A549 (cell line): ENCODE measurements at regions of chr15 and their contacts with region 1.

Region 1: DNA sequence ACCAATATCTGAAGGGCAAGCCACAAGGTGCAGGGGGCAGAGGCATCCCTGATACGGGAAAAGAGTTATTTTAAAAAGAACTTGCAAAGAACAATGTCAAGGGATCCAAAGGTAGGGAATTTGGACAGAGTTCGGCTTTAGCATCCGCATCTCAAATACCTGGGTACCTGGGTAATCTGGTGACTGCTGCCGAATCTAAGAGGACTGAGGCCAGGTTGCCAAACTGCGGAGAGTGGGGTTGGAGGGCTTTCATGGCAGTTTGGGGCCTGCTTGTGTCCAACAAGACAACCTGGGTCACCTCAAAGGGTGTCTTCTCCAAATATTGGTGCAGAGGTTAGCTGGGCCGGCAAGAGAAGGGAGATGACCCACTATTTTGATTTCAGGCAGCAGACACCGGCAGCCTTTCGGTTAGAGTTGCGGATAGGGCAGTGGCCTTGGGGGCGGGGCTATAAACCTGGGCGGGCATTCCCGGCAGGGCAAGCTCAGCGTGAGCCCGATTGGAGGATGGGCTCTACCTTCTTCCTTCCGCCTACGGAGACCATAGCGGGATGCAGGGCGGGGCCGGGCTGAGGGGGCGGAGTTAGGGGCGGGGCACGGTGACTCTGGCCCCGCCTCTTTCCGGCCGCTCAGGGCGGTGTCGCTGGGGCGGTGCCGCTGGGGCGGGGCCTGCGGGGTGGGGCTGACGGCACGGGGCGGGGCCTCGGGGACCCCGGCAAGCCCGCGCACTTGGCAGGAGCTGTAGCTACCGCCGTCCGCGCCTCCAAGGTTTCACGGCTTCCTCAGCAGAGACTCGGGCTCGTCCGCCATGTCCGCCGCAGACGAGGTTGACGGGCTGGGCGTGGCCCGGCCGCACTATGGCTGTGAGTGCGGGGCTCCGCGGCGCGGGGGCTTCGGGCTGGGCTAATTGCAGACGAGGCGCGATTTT is at the start of gene IQGAP1:
- DNase-seq: peak; percentile 98
- ATAC-seq: peak; percentile 96 to 97
- H3K4me3 ChIP-seq: peak within 1 kb of the TSS; percentile 78
- H3K27ac ChIP-seq: peak within 1 kb of the TSS; percentile 93 to 95
- H3K4me1 ChIP-seq: peaks cover 10% of the 10 kb centered on the region; the same call in 2 of the 3 replicates
- CTCF ChIP-seq: no peak
- EP300 ChIP-seq: no peak
- POLR2A ChIP-seq: peak; percentile 94
- RAD21 ChIP-seq: peak in 1 of 2 experiments; percentile 37; a peak in 2 of 5 replicates
- polyA plus RNA-seq, gene IQGAP1: 168 and 181 TPM in 2 replicates

Region 2: GRCh38 chr15:90001062-90001682 is 386.6 kb before region 1 on chr15 and contains the start of gene ZNF710:
- CTCF ChIA-PET with region 1: no interaction called
- POLR2A ChIA-PET with region 1: no interaction called
- DNase-seq: peak; percentile 58 to 77
- ATAC-seq: peak; percentile 17 to 40
- H3K4me3 ChIP-seq: peak within 1 kb of the TSS; percentile 85
- H3K27ac ChIP-seq: peak within 1 kb of the TSS; percentile 93 to 97
- H3K4me1 ChIP-seq: peaks cover 66% of the 10 kb centered on the region
- CTCF ChIP-seq: no peak
- EP300 ChIP-seq: no peak
- POLR2A ChIP-seq: 0 out of 2 replicates have a peak, but pooled peaks have one; percentile 30
- RAD21 ChIP-seq: no peak
- polyA plus RNA-seq, gene ZNF710: 2.6 and 5.0 TPM in 2 replicates

Region 3: DNA sequence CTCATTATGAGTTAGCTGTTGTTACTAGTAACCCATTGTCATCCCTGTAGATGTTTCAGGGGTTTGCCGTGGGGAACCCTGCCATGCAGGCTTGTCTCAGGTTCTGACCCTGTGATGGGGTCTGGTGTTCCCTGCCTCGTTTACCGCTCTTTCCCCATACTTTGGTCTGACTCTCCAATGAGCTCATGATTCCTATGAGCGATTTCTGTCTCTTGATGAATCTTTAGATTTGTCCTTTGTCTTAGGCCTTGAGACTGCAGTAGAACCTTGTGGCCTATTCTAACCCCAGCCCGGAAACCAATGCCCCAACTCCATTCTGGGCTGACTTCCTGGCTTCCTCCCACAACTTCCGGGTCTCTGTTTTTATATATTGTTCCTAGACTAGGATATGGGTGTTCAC is 11.0 kb before region 1 on chr15:
- CTCF ChIA-PET with region 1: interaction called, 8 read pairs
- POLR2A ChIA-PET with region 1: interaction called, 10 read pairs
- DNase-seq: no peak
- ATAC-seq: no peak
- H3K4me3 ChIP-seq: no peak overlapping the region
- H3K27ac ChIP-seq: no peak overlapping the region
- H3K4me1 ChIP-seq: peaks cover 3% of the 10 kb centered on the region; the same call in 1 of the 3 replicates
- CTCF ChIP-seq: no peak
- EP300 ChIP-seq: no peak
- POLR2A ChIP-seq: no peak
- RAD21 ChIP-seq: no peak

Region 4: DNA sequence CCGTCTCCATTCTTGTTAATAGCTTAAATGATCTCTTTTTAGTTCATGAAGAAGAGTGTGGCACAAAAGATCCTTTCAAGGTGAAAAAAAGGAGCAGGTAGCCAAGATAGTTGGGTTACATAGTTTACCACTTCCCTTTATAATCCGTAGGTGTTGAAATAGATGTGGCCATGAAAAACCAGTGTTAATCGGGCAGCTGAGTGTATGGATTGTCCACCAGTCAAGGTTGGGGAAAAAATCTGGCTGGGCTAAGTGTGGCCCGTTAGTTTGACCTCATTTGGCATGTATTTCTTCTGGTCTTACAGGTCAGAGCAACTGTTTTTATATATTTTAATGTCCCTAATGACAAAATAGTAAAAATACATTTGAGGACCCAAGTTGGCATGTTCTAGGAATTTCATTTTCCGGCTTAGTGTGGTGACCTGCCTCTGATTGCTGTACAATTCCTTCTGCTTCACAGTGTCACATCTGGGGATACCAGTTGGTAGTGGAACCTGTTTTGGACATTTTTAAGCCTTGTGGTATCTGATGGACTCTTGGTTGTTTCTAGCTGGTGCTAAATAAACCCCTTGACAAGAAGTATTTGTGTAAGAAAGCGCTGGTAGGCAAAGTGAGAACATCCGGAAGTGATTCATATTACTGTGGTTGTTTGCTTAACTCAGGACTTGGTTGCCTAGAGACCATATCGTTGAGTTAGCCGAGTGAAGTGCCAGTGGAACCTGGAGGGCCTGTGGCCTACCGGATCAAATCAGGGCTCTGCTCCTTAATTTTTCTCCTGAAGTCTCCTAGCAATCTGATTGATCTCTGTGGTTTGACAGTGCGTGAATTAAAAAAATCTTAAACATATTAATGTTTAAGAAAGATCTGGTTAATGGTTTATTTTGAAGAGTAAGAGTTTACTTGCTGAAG is 12.9 kb after region 1 on chr15:
- CTCF ChIA-PET with region 1: interaction called, 9 read pairs
- POLR2A ChIA-PET with region 1: interaction called, 52 read pairs
- DNase-seq: peak; percentile 94
- ATAC-seq: peak; percentile 97 to 98
- H3K4me3 ChIP-seq: peak overlapping the region; percentile 25; the same call in 2 of the 3 replicates
- H3K27ac ChIP-seq: peak overlapping the region; percentile 76 to 84
- H3K4me1 ChIP-seq: peaks cover 63% of the 10 kb centered on the region
- CTCF ChIP-seq: no peak
- EP300 ChIP-seq: no peak
- POLR2A ChIP-seq: no peak
- RAD21 ChIP-seq: 0 out of 5 replicates have a peak, but pooled peaks of 1 of the 2 experiments have one; percentile 18

Region 5: GRCh38 chr15:90412356-90413194 is 24.8 kb after region 1 on chr15:
- CTCF ChIA-PET with region 1: interaction called, 3 read pairs
- POLR2A ChIA-PET with region 1: interaction called, 14 read pairs
- DNase-seq: peak in 1 of 2 experiments; percentile 47
- ATAC-seq: peak; percentile 81 to 88
- H3K4me3 ChIP-seq: no peak overlapping the region; the same call in 2 of the 3 replicates
- H3K27ac ChIP-seq: peak overlapping the region; percentile 65 to 72; a peak in 4 of 6 replicates
- H3K4me1 ChIP-seq: peaks cover 52% of the 10 kb centered on the region
- CTCF ChIP-seq: no peak
- EP300 ChIP-seq: no peak
- POLR2A ChIP-seq: no peak
- RAD21 ChIP-seq: no peak

Region 6: DNA sequence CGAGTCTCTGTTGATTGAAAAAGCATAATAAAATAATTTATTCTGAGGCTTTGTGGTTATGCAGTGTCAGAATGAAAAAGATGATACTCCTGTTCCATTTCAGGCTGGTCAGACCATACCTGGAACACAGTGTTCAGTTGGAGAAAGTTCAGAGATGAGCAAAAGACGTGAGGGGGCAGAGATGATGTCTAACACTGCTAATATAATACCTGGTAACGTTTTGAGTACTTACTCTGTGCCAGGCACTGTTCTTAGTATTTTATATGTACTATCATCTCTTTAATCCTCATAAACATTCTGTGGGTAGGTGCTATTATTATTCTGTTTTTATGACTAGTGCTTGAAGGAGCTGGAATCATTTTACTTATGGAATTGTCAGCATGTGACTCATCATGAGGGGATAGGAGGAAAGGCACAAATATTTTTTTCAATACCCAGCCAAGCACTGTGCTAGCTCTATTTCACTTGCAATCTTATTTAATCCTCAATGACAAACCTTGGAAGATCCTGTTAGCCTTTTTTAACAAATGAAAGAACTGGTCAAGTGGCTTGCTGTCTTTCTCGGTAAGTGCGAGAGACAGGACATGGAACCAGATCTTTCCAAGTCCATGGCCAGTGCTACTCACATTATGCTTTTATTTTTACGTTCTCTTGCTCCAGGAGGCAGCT is 32.1 kb after region 1 on chr15:
- CTCF ChIA-PET with region 1: interaction called, 4 read pairs
- POLR2A ChIA-PET with region 1: interaction called, 14 read pairs
- DNase-seq: peak; percentile 41 to 58
- ATAC-seq: peak; percentile 83 to 85
- H3K4me3 ChIP-seq: no peak overlapping the region; the same call in 2 of the 3 replicates
- H3K27ac ChIP-seq: peak overlapping the region; percentile 70 to 76; a peak in 5 of 6 replicates
- H3K4me1 ChIP-seq: peaks cover 54% of the 10 kb centered on the region
- CTCF ChIP-seq: no peak
- EP300 ChIP-seq: no peak
- POLR2A ChIP-seq: no peak
- RAD21 ChIP-seq: no peak